Activated CD4-positive, alpha-beta memory T cell treated with anti-CD3 and anti-CD28 coated beads for 36 hours (primary cell): ENCODE measurements at regions of chr14 and their contacts with region 1.

Region 1: DNA sequence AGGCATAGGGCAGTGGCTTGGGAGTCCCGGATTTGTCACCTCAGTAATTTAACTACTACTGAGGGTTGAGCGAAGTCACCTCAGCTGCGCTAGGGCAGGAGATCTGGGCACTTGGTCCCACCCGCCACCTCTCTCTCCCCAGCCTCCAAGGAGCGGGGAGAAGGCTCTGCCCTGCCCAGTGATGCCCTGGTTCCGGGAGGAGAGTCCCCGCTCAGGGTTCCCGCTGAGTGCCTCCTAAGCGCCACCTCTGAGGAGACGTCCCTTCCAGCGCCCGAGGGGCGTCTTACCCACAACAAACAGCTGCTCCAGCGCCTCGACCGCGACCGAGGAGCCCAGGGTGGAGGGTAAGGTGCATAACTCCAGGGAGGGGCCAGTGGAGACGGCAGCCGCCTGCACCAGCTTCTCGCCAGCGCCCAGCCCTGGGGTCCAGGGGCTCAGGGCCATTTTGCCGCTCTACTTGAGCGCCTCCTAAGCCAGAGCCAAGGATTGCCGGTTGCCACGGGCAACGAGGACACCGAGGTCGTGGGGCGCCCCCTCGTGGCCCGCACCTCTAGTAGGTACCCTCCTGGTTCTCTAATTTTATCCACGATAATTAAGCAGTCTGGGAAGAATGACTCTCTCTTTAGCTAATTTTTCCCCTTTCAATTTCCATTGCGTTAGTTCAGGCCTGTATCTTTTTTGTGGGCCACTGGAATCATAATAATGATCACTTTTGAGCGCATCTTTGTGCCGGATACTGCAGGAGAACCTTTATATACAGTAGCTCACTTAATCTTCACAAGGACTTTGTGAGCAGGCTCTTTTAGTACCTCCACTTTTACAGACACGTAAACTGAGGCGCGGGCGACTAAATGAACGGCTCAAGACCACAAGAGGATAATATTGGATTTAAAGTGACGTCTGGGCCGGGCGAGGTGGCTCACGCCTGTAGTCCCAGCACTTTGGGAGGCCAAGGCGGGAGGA is at the start of gene CCDC175:
- DNase-seq: peak; percentile 89
- H3K4me3 Mint-ChIP-seq: peak within 1 kb of the TSS; percentile 74
- H3K27ac Mint-ChIP-seq: no peak within 1 kb of the TSS
- H3K4me1 Mint-ChIP-seq: peaks cover 9% of the 10 kb centered on the region
- H3K27me3 Mint-ChIP-seq: peaks cover 12% of the 10 kb centered on the region
- total RNA-seq, gene CCDC175: not detected

Region 2: DNA sequence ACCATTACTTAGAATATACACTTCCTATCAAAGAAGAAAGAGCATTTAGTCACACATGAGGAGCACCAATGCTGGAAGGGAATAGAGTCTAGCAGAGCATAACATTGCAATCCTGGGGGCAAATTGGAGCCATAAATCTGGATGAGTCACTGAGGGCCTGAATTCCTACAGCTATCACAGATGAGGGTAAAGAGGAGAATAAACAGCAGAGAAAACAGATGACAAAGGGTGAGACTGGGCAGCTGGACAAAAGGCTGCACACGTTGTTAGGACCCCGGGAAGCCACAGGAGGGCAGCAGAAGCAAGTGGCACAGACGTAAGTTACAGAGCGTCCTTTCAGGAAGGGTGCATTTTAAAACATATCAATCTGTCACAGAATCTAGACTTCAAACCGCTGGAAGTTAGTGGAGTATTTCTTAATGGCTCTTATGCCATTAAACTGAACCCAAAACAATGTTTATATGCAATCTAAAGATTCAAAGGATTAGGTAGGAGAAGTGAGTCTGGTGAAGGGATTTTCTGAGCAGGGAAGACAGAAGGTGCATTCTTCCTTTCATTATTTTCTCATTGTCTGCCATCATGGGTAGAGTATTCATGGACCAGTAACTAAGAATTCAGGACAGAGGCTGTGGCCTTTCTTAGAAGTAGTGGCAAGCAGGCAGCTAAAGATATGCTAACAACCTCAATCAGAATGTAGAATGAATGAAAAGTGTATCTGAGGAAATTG is 548.0 kb before region 1 on chr14:
- CTCF ChIA-PET with region 1: no interaction called
- POLR2A ChIA-PET with region 1: no interaction called
- intact Hi-C with region 1: loop called (anchors 1 kb)
- DNase-seq: peak; percentile 53
- H3K4me3 Mint-ChIP-seq: no peak overlapping the region
- H3K27ac Mint-ChIP-seq: no peak overlapping the region
- H3K4me1 Mint-ChIP-seq: peaks cover 3% of the 10 kb centered on the region
- H3K27me3 Mint-ChIP-seq: peaks cover 14% of the 10 kb centered on the region

Region 3: DNA sequence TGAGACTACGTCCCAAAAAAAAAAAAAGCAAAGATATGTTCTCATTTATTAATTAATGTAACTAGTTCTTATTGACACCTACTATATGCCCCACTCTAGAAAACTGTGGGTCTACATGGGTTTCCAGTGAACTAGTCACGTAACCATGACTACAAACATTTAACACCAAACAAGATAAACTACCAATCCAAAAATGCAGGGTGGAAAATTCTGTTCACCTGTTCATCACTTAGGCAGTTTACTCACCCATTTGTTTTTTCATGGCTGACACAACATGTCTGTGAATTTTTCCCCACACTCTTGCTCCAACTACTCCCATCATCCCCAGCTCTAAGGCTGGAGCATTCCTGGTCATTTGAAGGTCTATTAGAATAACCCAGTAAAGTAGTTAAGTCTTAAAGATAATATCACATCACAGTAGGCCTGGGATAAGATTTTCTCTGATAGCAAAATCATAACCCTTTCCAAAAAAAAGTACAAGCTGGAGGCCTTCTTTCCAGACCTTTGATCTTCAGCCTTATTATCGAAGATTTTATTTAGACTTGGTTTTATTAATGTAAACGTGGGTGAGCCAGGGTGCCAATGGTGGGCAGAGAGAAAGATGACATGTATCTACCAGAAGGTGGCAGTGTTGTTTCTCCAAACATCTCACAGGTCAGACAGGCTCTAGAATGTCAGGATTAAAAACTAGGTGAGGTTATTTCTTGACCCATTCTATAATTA is 449.7 kb before region 1 on chr14:
- CTCF ChIA-PET with region 1: interaction called, 27 read pairs
- POLR2A ChIA-PET with region 1: no interaction called
- intact Hi-C with region 1: loop called (anchors 1 kb)
- DNase-seq: peak; percentile 15
- H3K4me3 Mint-ChIP-seq: no peak overlapping the region
- H3K27ac Mint-ChIP-seq: no peak overlapping the region
- H3K4me1 Mint-ChIP-seq: no peaks in the 10 kb centered on the region
- H3K27me3 Mint-ChIP-seq: peaks cover 16% of the 10 kb centered on the region

Region 4: DNA sequence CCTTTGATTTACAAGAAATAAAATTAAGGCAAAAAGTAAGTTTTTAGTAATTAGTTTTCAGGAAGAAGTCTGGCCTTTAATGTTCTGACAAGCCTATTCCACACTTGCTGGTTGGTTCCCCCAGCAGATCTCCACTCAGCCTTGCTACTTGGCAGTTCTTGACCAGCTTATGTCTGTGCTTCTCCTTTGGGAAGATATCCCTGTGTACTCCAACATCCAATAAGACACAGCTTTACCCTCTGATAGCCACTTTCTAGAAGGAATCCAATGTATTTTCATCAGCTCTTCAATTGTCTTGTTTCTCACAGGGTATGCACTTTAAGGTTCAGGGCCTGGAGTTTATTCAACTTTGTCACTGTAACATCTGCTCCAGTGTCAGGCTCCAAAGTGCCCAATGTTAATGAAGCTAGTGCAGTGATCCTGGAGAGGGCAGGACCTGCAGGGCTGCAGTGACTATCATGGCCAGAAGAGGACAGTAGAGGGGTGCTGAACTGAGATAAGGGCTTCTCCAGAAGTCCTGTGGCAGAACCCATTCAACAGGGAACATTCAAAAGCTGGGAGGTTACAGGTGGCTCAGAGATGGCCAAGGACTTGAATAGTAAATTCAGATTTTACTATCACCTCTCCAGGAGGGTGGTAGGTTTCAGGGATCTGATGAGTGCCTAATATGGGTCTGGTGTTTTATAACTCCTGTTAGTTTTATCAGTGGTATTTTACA is 69.4 kb before region 1 on chr14:
- CTCF ChIA-PET with region 1: interaction called, 50 read pairs
- POLR2A ChIA-PET with region 1: no interaction called
- intact Hi-C with region 1: loop called (anchors 1 kb)
- DNase-seq: peak; percentile 70
- H3K4me3 Mint-ChIP-seq: no peak overlapping the region
- H3K27ac Mint-ChIP-seq: no peak overlapping the region
- H3K4me1 Mint-ChIP-seq: peaks cover 9% of the 10 kb centered on the region
- H3K27me3 Mint-ChIP-seq: peaks cover 1% of the 10 kb centered on the region

Region 5: GRCh38 chr14:59560314-59560713 is 16.3 kb before region 1 on chr14:
- CTCF ChIA-PET with region 1: interaction called, 15 read pairs
- POLR2A ChIA-PET with region 1: no interaction called
- intact Hi-C with region 1: no loop called
- DNase-seq: no peak
- H3K4me3 Mint-ChIP-seq: no peak overlapping the region
- H3K27ac Mint-ChIP-seq: no peak overlapping the region
- H3K4me1 Mint-ChIP-seq: no peaks in the 10 kb centered on the region
- H3K27me3 Mint-ChIP-seq: peaks cover 4% of the 10 kb centered on the region